ENCODE measurements at regions of chr20 and their contacts with region 1.

Region 1: DNA sequence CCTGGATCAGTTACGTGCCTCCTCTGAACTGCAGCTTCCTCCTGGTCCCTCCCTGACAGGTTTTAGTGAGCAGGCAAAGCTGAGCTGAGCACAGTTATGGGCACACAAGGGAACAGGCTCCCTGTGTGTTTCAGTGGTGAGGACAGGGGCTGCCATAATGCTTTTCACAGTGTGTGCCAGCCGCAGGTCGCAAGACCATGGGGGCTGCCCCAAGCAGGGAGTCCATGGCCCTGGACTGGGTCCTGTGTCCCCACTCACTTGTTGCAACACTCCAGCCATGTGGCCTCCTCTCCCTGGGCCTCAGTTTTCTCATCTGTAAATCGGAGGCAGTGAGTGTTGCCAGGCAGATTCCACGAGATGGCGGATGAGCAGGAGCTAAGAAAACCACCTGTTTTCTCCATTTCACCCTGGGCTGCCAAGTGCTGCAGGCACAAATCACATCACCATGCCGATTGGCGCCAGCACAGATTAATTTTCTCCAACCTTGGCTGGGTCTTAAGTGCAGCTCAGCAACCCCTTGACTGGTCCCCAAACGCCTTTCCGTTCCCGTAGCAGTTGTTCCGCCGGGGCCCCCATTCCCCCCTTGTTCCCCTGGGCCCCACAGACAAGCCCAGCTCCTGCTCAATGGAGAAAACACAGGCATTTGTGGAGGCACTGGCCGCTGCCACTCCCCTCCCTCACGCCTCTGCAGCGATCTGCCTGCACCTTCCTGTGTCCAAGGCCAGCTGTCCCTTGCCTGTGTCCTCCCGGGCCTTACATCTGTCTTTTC is 57.1 kb upstream of the NNAT start:
- DNase-seq: no peak
- H3K4me3 ChIP-seq: no peak overlapping the region
- H3K27ac ChIP-seq: no peak overlapping the region
- H3K4me1 ChIP-seq: no peaks in the 10 kb centered on the region
- H3K27me3 ChIP-seq: no peaks in the 10 kb centered on the region
- CTCF ChIP-seq: no peak
- POLR2A ChIP-seq: no peak

Region 2: GRCh38 chr20:37435607-37436006 is 28.3 kb before region 1 on chr20:
- intact Hi-C with region 1: loop called (anchors 1 kb)
- DNase-seq: no peak
- H3K4me3 ChIP-seq: no peak overlapping the region
- H3K27ac ChIP-seq: no peak overlapping the region
- H3K4me1 ChIP-seq: no peaks in the 10 kb centered on the region
- H3K27me3 ChIP-seq: no peaks in the 10 kb centered on the region
- CTCF ChIP-seq: no peak
- POLR2A ChIP-seq: no peak

Measured in breast epithelium (tissue), 4 donors.